ENCODE measurements at regions of chr19 and their contacts with region 1.

Region 1: GRCh38 chr19:29941828-29942403 is at the start of gene URI1:
- DNase-seq: peak; percentile 91
- H3K4me3 ChIP-seq: peak within 1 kb of the TSS; percentile 81
- H3K27ac ChIP-seq: peak within 1 kb of the TSS; percentile 77
- H3K4me1 ChIP-seq: peaks cover 25% of the 10 kb centered on the region
- H3K27me3 ChIP-seq: no peaks in the 10 kb centered on the region
- CTCF ChIP-seq: no peak
- total RNA-seq, gene URI1: 88.6 and 93.0 TPM in 2 replicates

Region 2: DNA sequence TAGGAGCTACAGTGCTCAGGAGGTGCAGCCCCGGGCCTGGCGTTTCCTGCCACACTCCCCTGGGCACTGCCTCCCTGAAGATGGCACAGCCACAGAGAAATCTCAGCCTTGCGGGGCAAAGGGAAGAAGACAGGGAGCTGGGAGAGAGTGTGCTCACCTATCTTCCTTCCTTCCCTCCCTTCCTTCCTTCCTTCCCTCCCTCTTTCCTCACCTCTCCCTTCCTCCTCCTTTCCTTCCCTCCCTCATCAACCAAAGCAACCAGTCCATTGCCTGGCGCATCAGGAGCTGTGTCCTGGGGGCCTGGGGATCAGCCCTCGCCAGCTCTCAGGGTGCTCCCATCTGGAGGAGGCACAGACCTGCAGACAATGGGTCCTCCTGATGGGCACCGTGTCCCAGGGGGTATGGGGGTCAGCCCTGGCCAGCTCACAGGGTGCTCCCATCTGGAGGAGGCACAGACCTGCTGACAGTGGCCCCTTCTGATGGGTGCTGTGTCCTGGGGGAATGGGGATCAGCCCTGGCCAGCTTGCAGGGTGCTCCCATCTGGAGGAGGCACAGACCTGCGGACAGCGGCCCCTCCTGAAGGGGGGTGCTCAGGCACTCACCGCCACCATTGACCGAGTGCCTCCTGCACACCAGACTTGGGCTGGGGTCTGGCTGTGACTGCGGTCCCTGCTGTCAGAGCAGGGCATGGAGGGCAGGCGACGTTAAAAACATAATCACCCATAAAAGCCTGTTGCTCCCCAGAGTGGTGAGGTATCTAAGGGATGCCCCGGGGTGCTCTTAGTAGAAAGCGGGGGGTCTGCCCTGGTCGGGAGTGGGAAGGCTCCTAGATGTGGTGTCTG is 120.4 kb after region 1 on chr19:
- CTCF ChIA-PET with region 1: interaction called, 5 read pairs
- POLR2A ChIA-PET with region 1: interaction called, 11 read pairs
- intact Hi-C with region 1: no loop called
- DNase-seq: no peak
- H3K4me3 ChIP-seq: no peak overlapping the region
- H3K27ac ChIP-seq: no peak overlapping the region
- H3K4me1 ChIP-seq: no peaks in the 10 kb centered on the region
- H3K27me3 ChIP-seq: no peaks in the 10 kb centered on the region
- CTCF ChIP-seq: no peak

Measured in A673 (cell line).